Activated naive CD4-positive, alpha-beta T cell treated with anti-CD3 and anti-CD28 coated beads for 36 hours (primary cell): ENCODE measurements at regions of chr2 and their contacts with region 1.

Region 1: DNA sequence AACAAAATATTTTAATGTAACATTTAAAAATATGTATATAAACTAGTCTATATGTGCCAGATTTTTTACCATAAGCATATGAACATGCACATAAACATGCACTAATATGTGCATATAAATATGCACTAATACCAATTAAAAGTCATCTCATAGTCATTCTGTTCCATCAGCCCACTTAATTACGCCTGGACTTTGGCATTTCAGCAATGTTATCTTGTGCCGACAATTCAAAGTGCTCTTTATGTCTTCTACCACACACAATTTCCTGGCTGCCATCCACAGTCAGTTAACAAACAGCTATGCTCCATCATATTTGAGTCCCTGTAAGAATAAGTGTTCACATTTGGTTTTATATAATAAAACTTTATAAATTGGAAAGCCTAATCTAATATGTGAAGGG is 92.6 kb upstream of the TSPYL6 start:
- DNase-seq: no peak
- H3K4me3 Mint-ChIP-seq: no peak overlapping the region
- H3K27ac Mint-ChIP-seq: no peak overlapping the region
- H3K4me1 Mint-ChIP-seq: no peaks in the 10 kb centered on the region
- H3K27me3 Mint-ChIP-seq: peaks cover 4% of the 10 kb centered on the region

Region 2: DNA sequence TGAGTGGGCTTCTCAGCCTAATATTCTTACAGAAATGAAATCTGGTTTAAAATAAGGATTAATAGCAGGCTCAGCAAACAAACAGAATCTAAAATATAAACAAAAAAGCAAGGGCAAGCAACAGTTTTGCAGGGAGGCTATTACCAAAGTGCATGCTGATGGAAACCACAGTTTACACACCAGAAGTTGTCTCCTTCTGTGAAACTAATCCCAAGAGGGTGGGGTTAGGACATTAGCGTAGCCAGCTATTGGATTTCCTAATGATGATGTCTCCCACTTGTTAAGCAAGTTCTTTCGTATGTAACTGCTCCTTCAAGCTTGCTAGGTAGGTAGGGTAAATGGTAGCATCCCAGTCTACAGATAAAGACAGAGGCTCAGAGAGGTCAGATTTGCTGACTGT is 27.6 kb before region 1 on chr2:
- CTCF ChIA-PET with region 1: no interaction called
- intact Hi-C with region 1: no loop called
- DNase-seq: no peak
- H3K4me3 Mint-ChIP-seq: no peak overlapping the region
- H3K27ac Mint-ChIP-seq: no peak overlapping the region
- H3K4me1 Mint-ChIP-seq: no peaks in the 10 kb centered on the region
- H3K27me3 Mint-ChIP-seq: no peaks in the 10 kb centered on the region

Region 3: DNA sequence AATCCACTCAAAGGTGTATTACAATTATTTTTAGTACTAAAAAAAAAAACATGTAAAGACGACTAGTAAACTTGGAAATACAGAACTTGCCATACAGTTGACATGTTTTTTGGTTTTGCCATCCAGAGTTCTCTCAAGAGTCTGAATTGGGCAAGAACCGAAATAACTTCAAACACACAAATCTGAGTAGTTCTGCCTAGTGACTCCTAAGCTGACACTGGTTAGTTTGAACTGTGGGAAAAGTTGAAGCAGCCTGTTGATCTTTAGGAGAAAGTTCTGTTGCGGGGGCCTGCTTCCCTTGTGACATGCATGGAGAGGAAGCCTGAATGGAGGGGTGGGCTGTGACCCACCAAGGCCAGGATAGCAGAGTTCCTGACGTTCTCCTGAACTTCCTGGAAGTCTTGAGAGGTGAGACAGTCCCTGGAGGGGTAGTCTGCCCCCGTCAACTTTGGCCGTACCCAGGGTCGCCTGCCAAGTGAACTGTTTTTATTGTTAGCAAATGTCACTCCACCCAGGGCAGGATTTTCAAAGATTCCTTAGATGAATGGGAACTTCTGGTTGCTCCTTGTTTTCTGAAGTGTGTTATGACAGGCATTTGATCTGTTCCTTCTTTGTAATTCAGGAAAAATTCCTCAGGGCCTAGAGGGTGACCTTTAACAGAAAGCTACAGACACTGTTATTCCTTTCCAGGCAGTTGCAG is 21.9 kb after region 1 on chr2:
- CTCF ChIA-PET with region 1: no interaction called
- intact Hi-C with region 1: no loop called
- DNase-seq: no peak
- H3K4me3 Mint-ChIP-seq: no peak overlapping the region
- H3K27ac Mint-ChIP-seq: no peak overlapping the region
- H3K4me1 Mint-ChIP-seq: no peaks in the 10 kb centered on the region
- H3K27me3 Mint-ChIP-seq: peaks cover 4% of the 10 kb centered on the region

Region 4: GRCh38 chr2:54402350-54402749 is 53.7 kb after region 1 on chr2:
- CTCF ChIA-PET with region 1: no interaction called
- intact Hi-C with region 1: loop called (anchors 5 kb)
- DNase-seq: no peak
- H3K4me3 Mint-ChIP-seq: no peak overlapping the region
- H3K27ac Mint-ChIP-seq: no peak overlapping the region
- H3K4me1 Mint-ChIP-seq: no peaks in the 10 kb centered on the region
- H3K27me3 Mint-ChIP-seq: no peaks in the 10 kb centered on the region